ENCODE measurements at regions of chr3 and their contacts with region 1.

Region 1: DNA sequence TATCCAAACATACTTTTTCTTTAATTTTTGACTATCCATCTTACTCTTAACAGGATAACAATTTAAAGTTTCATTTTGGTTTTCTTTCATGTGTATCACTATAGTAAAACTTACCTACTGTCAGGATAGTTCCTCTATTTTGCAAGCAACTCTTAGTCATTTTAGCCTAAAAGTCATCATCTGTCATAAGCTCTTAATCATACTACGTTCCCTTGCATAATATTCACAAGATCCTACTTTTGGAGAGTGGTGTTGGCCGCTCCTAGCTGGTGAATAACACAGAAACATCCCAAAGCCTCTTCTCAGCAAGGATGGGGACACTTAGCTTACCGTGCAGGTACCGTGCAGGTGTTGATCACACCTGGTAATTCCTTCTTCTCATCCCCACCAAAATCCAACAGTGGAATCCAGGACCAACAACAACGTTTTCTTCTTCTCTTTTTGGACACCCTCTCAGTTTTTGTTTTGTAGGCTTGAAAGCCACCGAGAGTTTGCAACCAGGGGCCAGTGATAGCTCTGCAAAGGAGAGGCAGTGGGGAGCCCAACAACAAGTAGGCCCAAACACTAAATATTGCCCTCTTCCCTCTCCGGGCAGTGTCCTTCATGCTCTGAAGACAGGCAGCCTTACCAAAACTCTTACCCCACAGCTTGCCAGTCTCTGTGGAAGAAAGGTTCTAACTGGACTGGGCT is 433 bp downstream of the FILIP1L start:
- DNase-seq: no peak
- H3K4me3 ChIP-seq: no peak overlapping the region
- H3K27ac ChIP-seq: no peak overlapping the region
- H3K4me1 ChIP-seq: no peaks in the 10 kb centered on the region
- H3K27me3 ChIP-seq: no peaks in the 10 kb centered on the region
- CTCF ChIP-seq: no peak
- POLR2A ChIP-seq: no peak

Region 2: DNA sequence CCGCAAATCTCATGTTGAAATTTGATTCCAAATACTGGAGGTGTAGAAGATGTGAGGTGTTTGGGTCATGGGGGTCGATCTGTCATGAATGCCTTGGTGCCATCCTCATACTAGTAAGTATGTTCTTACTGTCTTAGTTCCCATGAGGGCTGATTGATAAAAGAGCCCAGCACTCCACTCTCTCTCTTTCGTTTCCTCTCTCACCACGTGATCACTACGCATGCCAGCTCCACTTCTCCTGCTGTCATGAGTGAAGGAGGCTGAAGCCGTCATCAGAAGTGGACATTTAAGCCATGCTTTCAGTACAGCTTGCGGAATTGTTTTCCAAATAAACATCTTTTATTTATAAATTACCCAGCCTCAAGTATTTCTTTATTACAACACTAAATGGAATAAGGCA is 1941.2 kb before region 1 on chr3:
- intact Hi-C with region 1: no loop called
- DNase-seq: no peak
- H3K4me3 ChIP-seq: no peak overlapping the region
- H3K27ac ChIP-seq: no peak overlapping the region
- H3K4me1 ChIP-seq: no peaks in the 10 kb centered on the region
- H3K27me3 ChIP-seq: no peaks in the 10 kb centered on the region
- CTCF ChIP-seq: no peak
- POLR2A ChIP-seq: no peak

Region 3: DNA sequence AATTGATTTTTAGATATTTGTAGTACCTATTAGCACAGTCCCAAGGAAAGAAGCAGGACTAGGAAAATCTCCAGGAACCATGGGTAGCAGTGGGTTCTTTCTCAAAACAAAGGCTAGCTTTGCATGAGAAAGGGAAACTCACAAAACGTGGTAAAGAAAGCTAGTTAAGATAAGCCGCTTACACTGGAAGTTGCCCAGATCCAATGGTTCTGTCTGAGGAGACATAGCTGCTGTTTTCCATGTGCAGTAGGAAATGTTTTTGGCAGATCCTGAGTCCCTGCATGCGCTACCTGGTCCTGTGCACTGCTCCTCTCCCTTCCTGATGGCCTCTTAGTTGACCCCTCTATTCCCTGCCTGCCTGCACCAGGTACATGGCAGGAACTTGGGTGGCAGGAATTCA is 655.8 kb after region 1 on chr3:
- intact Hi-C with region 1: loop called (anchors 5 kb)
- DNase-seq: no peak
- H3K4me3 ChIP-seq: no peak overlapping the region
- H3K27ac ChIP-seq: no peak overlapping the region
- H3K4me1 ChIP-seq: no peaks in the 10 kb centered on the region
- H3K27me3 ChIP-seq: no peaks in the 10 kb centered on the region
- CTCF ChIP-seq: no peak
- POLR2A ChIP-seq: no peak

Measured in breast epithelium (tissue), 4 donors.